Dendritic cell treated with granulocyte-macrophage colony-stimulating factor and Interleukin-4, amounts not matched to agents 40 ng/mL and 50 ng/mL, for 4 days (primary cell): ENCODE measurements at regions of chr6 and their contacts with region 1.

Region 1: DNA sequence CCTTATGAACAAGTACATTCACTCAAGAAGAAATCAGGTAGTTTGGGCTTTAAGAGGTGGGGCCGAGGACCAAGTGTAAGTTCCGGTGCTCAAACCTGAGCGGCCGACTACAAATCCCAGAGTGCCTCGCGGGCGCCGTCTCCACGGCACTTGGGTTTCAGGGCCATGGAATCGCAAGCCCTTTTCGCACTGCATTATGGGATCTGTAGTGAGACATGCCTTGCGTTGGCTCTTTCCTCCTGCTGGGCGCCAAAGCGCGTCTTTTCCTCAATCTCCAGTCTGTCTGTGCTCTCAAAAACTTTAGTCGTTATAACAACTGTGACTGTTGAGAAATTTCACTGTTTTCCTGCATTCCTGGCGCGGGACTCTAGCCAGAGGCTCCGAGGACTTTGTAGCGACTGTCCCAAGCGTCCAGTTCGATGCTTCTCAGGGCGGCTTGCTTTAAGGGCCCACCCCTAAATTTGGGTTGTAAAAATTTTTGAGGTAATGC is 433 bp upstream of the FBXO9 start:
- H3K4me3 Mint-ChIP-seq: peak overlapping the region; percentile 98
- H3K27ac Mint-ChIP-seq: peak overlapping the region; percentile 96
- H3K4me1 Mint-ChIP-seq: peaks cover 52% of the 10 kb centered on the region
- H3K27me3 Mint-ChIP-seq: no peaks in the 10 kb centered on the region

Region 2: DNA sequence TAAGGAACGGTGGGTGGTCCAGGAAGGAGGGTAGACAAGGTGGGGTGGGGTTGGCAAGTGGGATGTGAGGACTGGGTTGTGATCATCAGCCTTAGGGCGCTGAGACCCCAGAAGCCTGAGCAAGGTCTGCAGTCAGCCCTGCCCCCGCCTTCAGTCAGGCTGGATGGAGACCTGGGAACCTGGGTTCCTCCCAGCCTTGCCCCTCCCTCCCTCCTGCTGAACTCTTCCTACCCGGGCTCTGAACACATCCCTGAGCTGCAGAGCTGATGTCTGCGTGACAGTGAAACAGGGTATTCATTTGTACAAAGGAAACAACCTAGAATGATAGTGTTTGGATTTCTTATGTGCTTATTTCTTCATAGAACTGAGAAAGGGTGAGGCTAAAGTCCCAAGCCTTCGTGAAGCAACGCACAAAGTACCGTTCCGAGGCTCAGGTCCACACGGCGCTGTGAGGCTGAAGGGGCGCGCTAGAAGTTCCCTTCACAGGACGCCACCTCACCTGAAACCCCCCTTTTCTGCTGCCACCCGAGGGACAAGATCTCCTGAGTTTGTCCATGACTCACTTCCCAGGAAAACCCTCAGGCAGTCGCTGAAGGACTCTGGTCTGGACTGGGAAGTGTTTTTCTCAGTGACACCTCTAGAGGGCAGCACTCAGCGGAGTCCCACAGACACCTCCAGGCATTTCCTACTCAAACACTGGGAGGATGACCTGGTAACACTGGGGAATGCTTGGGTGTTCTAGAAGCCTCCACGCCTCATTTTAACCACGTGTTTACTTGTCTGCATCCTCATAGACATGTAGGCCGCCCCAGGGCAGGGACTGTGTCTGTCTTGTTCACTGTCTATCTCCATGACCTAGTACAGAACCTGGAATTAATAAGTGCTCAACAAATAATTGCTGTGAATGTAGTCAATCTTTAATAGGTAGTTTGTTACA is 225.4 kb before region 1 on chr6:
- intact Hi-C with region 1: loop called (anchors 2 kb)
- H3K4me3 Mint-ChIP-seq: no peak overlapping the region
- H3K27ac Mint-ChIP-seq: no peak overlapping the region
- H3K4me1 Mint-ChIP-seq: no peaks in the 10 kb centered on the region
- H3K27me3 Mint-ChIP-seq: peaks cover 8% of the 10 kb centered on the region

Region 3: GRCh38 chr6:52881996-52882841 is 182.6 kb before region 1 on chr6:
- intact Hi-C with region 1: loop called (anchors 1 kb)
- H3K4me3 Mint-ChIP-seq: peak overlapping the region; percentile 73
- H3K27ac Mint-ChIP-seq: peak overlapping the region; percentile 65
- H3K4me1 Mint-ChIP-seq: no peaks in the 10 kb centered on the region
- H3K27me3 Mint-ChIP-seq: no peaks in the 10 kb centered on the region

Region 4: GRCh38 chr6:52995913-52996645 is 68.7 kb before region 1 on chr6:
- intact Hi-C with region 1: loop called (anchors 1 kb)
- H3K4me3 Mint-ChIP-seq: peak overlapping the region; percentile 85
- H3K27ac Mint-ChIP-seq: peak overlapping the region; percentile 79
- H3K4me1 Mint-ChIP-seq: peaks cover 31% of the 10 kb centered on the region
- H3K27me3 Mint-ChIP-seq: peaks cover 25% of the 10 kb centered on the region